ENCODE measurements at regions of chr6 and their contacts with region 1.

Region 1: DNA sequence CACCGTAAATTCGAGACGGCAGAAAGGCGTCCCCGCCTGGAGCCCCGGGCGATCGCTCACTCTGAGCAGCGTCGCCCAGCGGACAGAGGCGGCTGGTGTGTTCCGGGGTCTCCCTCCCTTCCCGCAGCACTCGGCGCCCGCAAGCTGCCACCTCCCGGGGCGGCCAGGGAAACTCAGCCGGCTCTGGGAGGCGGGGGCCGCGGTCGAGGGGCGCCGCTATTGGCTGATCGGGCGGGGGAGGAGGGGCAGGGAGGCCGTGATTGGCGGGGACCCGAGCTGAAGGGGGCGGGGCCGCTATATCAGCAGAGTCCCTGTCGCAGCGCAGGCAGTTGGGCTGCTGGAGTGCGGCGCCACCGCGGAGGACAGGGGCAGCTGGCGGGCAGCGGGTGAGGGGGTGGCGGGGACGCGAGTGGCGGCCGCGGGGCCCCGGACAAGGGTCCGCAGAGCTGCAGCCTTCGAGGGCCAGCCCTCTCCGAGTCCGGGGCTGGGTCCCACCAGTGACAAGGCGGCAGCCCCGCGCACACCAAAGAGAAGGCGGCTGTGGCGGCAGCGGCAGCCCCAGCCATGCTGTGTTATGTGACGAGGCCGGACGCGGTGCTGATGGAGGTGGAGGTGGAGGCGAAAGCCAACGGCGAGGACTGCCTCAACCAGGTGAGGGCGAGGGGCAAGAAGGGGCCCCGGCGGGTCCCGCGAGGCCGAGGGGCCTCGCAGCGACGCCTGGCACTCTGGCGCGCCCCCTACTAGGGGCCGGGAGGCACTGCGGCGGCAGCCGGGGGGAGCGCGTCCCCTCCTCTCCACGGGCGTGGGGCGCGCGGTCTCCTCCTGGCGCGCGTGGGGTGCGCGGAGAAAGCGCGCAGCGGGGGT is at the start of gene MYLIP:
- DNase-seq: peak; percentile 94
- H3K4me3 Mint-ChIP-seq: peak within 1 kb of the TSS; percentile 91
- H3K27ac Mint-ChIP-seq: peak within 1 kb of the TSS; percentile 91
- H3K4me1 Mint-ChIP-seq: peaks cover 35% of the 10 kb centered on the region
- H3K27me3 Mint-ChIP-seq: peaks cover 21% of the 10 kb centered on the region
- total RNA-seq, gene MYLIP: 20.7 and 21.9 TPM in 2 replicates

Region 2: DNA sequence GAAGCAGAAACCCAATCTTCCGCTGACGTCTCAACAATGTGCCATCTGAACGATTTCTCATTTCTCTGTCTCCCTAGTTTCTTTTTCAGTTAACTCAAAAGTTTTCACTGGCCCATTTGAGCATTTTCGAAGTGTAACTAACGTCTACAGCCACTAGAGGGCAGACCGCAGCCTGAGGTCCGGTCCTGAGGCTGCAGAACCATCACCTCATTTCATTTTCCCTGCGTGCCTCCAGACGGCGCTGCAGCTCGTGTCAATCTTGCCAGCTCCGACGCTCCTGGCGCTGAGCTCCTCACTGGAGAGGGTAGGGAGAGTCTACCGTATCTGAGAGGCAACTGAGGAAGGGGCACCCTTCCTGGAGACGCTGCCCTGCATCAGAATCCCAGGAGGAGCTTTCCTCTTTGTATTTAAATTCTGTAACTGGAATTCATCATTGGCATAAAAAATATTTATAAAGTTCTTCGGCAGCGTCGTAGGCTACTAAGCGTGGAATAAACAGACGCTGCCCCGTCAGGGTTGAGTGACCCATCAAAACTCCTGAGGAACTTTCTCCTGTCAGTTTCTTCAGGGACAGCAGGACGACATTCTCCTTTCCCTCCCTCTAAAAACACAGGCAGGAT is 437.6 kb before region 1 on chr6:
- intact Hi-C with region 1: loop called (anchors 1 kb)
- DNase-seq: peak; percentile 76
- H3K4me3 Mint-ChIP-seq: no peak overlapping the region
- H3K27ac Mint-ChIP-seq: no peak overlapping the region
- H3K4me1 Mint-ChIP-seq: peaks cover 16% of the 10 kb centered on the region
- H3K27me3 Mint-ChIP-seq: peaks cover 7% of the 10 kb centered on the region

Region 3: DNA sequence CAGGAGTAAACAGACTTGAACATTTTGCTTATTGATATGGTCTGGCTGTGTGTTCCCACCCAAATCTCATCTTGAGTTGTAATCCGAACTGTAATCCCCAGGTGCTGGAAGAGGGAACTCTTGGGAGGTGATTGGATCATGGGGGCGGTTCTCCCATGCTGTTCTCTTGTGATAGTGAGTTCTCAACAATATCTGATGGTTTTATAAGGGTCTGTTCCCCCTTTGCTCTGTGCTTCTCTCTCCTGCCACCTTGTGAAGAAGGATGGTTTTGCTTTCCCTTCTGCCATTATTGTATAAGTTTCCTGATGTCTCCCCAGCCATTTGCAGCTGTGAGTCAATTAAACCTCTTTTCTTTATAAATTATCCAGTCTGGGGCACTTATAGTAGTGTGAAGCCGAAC is 39.9 kb after region 1 on chr6:
- intact Hi-C with region 1: loop called (anchors 2 kb)
- DNase-seq: no peak
- H3K4me3 Mint-ChIP-seq: no peak overlapping the region
- H3K27ac Mint-ChIP-seq: no peak overlapping the region
- H3K4me1 Mint-ChIP-seq: peaks cover 27% of the 10 kb centered on the region
- H3K27me3 Mint-ChIP-seq: peaks cover 12% of the 10 kb centered on the region

Region 4: DNA sequence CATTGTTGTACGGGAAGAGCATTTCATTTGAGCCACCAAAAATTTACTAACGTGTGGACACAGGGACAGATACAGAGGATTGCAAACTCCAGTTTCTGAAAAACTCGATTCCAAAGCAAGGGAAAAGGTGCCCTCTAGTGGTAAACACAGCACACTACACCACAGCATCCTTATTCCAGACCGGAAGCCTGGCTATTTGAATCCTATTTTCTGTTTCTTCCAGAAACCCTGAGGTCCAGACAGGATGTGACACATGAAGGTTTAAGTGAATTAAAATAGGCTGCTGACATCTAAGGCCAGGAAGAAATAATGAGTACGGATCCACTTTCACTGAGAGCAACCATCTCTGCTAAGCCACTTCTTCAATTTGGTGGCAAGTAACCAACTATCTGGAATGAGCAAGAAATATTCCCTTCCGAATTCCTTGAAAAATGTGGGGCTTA is 77.6 kb after region 1 on chr6:
- intact Hi-C with region 1: loop called (anchors 2 kb)
- DNase-seq: peak; percentile 22
- H3K4me3 Mint-ChIP-seq: no peak overlapping the region
- H3K27ac Mint-ChIP-seq: no peak overlapping the region
- H3K4me1 Mint-ChIP-seq: peaks cover 6% of the 10 kb centered on the region
- H3K27me3 Mint-ChIP-seq: peaks cover 27% of the 10 kb centered on the region